ENCODE measurements at regions of chr18 and their contacts with region 1.

Region 1: GRCh38 chr18:34219651-34220050 is 5.1 kb downstream of the NOL4 start:
- DNase-seq: no peak
- ATAC-seq: no peak
- H3K4me3 ChIP-seq: no peak overlapping the region
- H3K4me3 Mint-ChIP-seq: no peak overlapping the region
- H3K27ac ChIP-seq: no peak overlapping the region
- H3K27ac Mint-ChIP-seq: no peak overlapping the region
- H3K4me1 ChIP-seq: no peaks in the 10 kb centered on the region
- H3K4me1 Mint-ChIP-seq: peaks cover 0 to 4% (median 0%) of the 10 kb centered on the region in 7 donors
- H3K27me3 ChIP-seq: peaks cover 0 to 3% of the 10 kb centered on the region in 2 donors
- H3K27me3 Mint-ChIP-seq: peaks cover 28 to 40% (median 34%) of the 10 kb centered on the region in 5 donors

Region 2: DNA sequence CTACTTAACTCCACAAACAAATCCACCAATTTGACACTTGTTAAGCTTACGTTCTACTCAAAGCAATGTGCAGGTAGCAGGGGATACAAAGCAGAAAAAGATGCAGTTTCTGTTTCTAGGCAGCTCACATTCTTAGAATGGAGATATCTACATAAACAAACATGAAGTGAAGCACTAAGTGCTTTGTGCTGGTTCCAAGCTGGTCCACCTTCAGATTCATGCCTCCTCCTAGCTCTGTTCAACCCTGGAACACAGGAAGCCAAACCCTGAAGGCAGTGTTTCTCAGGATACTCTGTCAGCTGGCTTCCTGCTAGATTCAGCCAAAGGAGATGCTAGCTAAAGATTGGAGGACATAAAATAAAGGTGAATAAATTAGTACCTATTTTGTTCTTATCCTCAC is 60.3 kb after region 1 on chr18:
- CTCF ChIA-PET with region 1: no interaction called
- POLR2A ChIA-PET with region 1: no interaction called
- intact Hi-C with region 1: loop called in 1 of 2 experiments (anchors 10 kb)
- DNase-seq: no peak
- ATAC-seq: no peak
- H3K4me3 ChIP-seq: no peak overlapping the region
- H3K4me3 Mint-ChIP-seq: no peak overlapping the region
- H3K27ac ChIP-seq: no peak overlapping the region
- H3K27ac Mint-ChIP-seq: no peak overlapping the region
- H3K4me1 ChIP-seq: no peaks in the 10 kb centered on the region
- H3K4me1 Mint-ChIP-seq: peaks cover 0 to 1% (median 0%) of the 10 kb centered on the region in 7 donors
- H3K27me3 ChIP-seq: no peaks in the 10 kb centered on the region
- H3K27me3 Mint-ChIP-seq: no peaks in the 10 kb centered on the region